BJ (cell line): ENCODE measurements at regions of chr19 and their contacts with region 1.

Region 1: DNA sequence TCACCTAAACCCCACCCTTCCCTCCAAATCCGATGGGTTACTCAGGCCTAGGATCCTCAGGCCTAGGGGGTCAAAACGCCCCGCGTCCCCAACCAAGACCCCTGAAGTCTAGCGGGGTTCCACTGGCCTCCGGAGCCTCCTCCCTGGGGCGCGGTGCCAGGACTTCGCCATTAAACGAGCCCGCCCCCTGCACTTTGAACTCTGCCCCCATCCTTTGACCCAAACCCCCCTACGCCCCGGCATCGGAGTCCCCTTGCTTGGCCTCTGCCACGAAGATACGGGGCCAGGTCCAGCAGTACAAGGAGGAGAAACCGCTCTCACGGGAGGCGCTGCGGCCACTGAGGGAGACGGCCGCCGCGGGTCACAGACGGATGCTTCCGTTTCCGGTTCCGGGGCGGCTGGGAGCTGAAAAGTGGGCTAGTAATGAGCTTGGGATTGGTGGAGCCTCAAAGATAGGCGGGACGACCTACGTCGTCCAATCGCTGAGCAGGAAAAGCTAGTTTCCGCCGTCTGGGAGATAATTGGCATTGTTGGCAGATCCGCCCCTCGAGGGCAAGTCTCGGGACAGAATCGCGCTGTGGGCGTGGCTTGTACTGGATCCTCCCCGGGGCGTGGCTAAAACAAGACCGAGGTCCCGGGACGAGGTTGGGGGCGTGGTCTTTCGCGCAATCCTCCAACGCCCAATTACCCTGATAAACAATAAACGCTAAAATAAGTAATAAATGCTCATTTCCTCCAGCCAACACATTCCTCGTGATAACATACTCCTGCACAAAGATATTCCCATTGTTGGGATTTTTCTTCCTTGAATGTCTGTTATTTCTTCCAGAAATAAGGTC is 5.7 kb upstream of the ZNF77 start:
- DNase-seq: peak; percentile 97
- H3K4me3 ChIP-seq: peak overlapping the region; percentile 77
- H3K27me3 ChIP-seq: no peaks in the 10 kb centered on the region; the same call in 1 of the 2 replicates
- CTCF ChIP-seq: no peak

Region 2: GRCh38 chr19:2887391-2887914 is 63.1 kb before region 1 on chr19:
- CTCF ChIA-PET with region 1: interaction called, 22 read pairs
- POLR2A ChIA-PET with region 1: no interaction called
- DNase-seq: peak; percentile 29
- H3K4me3 ChIP-seq: no peak overlapping the region
- H3K27me3 ChIP-seq: no peaks in the 10 kb centered on the region
- CTCF ChIP-seq: peak; percentile 69

Region 3: GRCh38 chr19:2962045-2962561 is 11.6 kb after region 1 on chr19:
- CTCF ChIA-PET with region 1: interaction called, 55 read pairs
- POLR2A ChIA-PET with region 1: interaction called, 17 read pairs
- DNase-seq: peak; percentile 37
- H3K4me3 ChIP-seq: no peak overlapping the region
- H3K27me3 ChIP-seq: no peaks in the 10 kb centered on the region
- CTCF ChIP-seq: peak; percentile 60

Region 4: GRCh38 chr19:3108775-3109174 is 158.3 kb after region 1 on chr19:
- CTCF ChIA-PET with region 1: interaction called, 16 read pairs
- POLR2A ChIA-PET with region 1: no interaction called
- DNase-seq: no peak
- H3K4me3 ChIP-seq: no peak overlapping the region
- H3K27me3 ChIP-seq: no peaks in the 10 kb centered on the region
- CTCF ChIP-seq: peak; percentile 93

Region 5: DNA sequence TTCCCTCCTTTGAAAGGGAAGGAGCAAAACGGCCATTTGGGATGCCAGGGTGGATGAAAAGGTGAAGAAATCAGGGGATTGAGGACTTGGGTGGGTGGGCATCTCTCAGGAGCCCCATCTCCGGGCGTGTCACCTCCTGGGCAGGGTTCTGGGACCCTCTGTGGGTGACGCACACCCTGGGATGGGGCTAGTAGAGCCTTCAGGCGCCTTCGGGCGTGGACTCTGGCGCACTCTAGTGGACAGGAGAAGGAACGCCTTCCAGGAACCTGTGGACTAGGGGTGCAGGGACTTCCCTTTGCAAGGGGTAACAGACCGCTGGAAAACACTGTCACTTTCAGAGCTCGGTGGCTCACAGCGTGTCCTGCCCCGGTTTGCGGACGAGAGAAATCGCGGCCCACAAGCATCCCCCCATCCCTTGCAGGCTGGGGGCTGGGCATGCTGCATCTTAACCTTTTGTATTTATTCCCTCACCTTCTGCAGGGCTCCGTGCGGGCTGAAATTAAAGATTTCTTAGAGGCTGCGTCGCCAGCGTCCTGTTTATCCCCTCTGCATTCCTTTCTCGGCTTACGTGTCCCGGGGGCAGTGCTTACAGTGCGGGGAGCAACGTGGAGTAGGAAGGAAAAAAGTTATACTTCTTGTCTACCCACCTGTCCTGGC is 212.9 kb after region 1 on chr19:
- CTCF ChIA-PET with region 1: interaction called, 16 read pairs
- POLR2A ChIA-PET with region 1: no interaction called
- DNase-seq: no peak
- H3K4me3 ChIP-seq: no peak overlapping the region
- H3K27me3 ChIP-seq: no peaks in the 10 kb centered on the region
- CTCF ChIP-seq: peak; percentile 96

Region 6: DNA sequence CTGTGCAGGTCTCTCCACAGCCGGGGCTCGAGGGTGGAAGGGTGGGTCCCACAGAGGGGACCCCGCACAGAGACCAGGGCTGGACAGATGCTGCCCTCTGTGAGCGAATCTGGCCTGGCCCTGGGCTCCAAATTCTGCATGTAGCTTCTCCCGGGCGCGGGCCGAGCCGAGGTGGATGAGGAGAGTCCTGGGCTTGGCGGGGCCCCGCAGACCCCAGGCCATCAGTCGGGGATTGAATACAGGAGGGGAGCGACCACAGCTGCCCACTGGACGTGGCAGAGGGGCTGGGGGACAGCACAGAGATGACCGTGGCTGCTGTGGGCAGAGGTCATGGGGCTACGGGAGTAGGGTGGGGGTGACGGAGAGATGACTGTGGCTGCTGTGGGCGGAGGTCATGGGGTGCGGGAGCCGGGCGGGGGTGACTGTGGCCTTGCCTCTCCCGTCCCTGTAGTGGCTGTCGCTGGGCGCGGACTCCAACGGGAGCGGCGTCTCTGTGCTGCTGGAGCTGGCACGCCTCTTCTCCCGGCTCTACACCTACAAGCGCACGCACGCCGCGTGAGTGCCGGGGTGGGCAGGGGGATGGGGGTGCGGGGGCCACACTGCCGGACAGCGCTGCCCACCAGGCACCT is 250.7 kb after region 1 on chr19:
- CTCF ChIA-PET with region 1: interaction called, 13 read pairs
- POLR2A ChIA-PET with region 1: no interaction called
- DNase-seq: no peak
- H3K4me3 ChIP-seq: no peak overlapping the region
- H3K27me3 ChIP-seq: no peaks in the 10 kb centered on the region
- CTCF ChIP-seq: no peak